GM12878 (cell line): ENCODE measurements at regions of chrX and their contacts with region 1.

Region 1: DNA sequence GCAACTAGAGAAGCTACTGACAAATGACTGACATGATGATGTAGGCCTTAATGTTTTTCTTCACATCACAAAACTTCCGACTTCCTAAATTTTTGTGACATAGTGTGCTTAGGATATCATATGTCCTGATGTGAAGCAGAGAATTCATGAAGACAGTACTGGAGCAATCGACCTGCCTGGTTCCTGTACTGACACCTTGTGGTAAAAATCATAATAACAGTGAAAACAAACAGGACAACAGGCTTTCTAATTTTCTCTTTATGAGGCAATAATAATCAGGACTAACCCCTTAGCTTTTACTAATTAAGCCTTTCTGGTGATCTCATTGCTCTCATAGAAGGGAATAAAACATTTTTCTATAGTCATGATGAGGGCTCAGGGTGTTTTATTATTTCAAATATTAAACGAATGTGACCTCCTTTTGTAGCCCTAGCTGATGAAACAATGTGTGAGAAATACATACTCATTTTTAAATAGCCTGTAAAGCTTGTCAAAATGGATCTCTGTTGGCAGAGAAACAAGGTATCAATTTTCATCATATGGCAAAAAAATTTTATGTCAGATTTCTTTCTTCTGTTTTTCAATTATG is 158.4 kb downstream of the TENT5D start:
- DNase-seq: no peak
- ATAC-seq: peak; percentile 70
- H3K4me3 ChIP-seq: no peak overlapping the region
- H3K27ac ChIP-seq: no peak overlapping the region
- H3K4me1 ChIP-seq: no peaks in the 10 kb centered on the region
- H3K27me3 ChIP-seq: no peaks in the 10 kb centered on the region
- CTCF ChIP-seq: peak; percentile 53 to 60 (median 56); a peak in 5 of 6 replicates
- EP300 ChIP-seq: no peak
- POLR2A ChIP-seq: no peak
- RAD21 ChIP-seq: peak; percentile 56

Region 2: DNA sequence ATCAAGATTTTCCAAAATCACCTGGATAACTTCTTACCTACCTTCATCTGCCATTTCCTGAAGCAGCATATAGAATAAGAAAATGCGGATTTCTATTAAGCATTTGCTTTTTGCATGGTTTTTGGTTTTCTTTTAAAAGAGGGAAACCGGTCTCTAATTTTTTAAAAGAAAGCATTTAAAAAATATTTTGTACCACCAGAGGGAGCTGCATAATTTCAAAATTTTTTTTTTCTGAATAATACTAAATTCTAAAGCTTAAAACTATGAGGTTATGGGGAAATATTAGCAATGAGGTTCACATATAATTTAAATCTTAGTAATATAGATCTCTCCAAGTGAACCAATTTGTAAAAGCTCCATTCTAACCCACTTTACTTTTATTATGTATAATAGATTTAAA is 296.1 kb before region 1 on chrX:
- CTCF ChIA-PET with region 1: no interaction called
- POLR2A ChIA-PET with region 1: no interaction called
- RAD21 ChIA-PET with region 1: no interaction called
- SMC1A ChIA-PET with region 1: no interaction called
- in situ Hi-C with region 1: no loop called
- intact Hi-C with region 1: loop called (anchors 5 kb)
- DNase-seq: no peak
- ATAC-seq: no peak
- H3K4me3 ChIP-seq: no peak overlapping the region
- H3K27ac ChIP-seq: no peak overlapping the region
- H3K4me1 ChIP-seq: no peaks in the 10 kb centered on the region
- H3K27me3 ChIP-seq: no peaks in the 10 kb centered on the region
- CTCF ChIP-seq: peak in 1 of 3 experiments; percentile 8; a peak in 1 of 6 replicates
- EP300 ChIP-seq: no peak
- POLR2A ChIP-seq: no peak
- RAD21 ChIP-seq: no peak

Region 3: DNA sequence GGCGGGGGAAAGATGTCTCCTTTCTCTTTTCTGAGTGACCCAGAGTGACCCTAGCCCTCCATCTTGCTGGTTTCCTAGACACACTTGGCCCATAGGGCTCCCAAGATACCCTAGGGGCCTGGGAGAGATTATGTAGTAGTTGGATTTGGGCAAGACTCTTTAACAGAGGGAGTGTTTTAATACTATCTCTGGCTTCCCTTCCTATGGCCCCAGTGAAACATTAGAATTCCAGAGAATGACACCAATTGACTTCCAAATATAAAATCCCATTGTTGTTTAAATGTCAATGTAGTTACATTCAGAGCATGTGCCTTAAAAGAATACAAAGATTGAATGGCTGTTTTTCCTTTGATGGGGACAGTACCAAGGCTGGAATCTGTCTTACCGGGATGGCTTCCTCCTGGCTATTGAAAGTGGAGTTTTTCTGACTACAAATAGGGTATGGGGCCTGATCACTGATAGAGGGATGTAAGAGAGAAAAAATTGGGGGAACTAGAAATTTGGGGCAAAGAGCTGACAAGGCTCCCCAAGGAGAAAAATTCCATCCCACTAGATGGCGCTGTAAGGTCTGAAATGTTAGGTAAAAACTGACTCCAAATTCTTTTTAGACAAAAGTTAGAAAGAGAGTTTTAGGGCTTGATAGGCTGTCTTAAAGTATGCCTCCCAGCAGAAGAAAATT is 147.6 kb before region 1 on chrX:
- CTCF ChIA-PET with region 1: interaction called, 3 read pairs
- POLR2A ChIA-PET with region 1: no interaction called
- RAD21 ChIA-PET with region 1: no interaction called
- SMC1A ChIA-PET with region 1: interaction called, 3 read pairs
- in situ Hi-C with region 1: no loop called
- intact Hi-C with region 1: loop called (anchors 1 kb)
- DNase-seq: no peak
- ATAC-seq: no peak
- H3K4me3 ChIP-seq: no peak overlapping the region
- H3K27ac ChIP-seq: no peak overlapping the region
- H3K4me1 ChIP-seq: no peaks in the 10 kb centered on the region
- H3K27me3 ChIP-seq: no peaks in the 10 kb centered on the region
- CTCF ChIP-seq: peak; percentile 23 to 37 (median 32); a peak in 3 of 6 replicates
- EP300 ChIP-seq: no peak
- POLR2A ChIP-seq: no peak
- RAD21 ChIP-seq: peak; percentile 35

Region 4: DNA sequence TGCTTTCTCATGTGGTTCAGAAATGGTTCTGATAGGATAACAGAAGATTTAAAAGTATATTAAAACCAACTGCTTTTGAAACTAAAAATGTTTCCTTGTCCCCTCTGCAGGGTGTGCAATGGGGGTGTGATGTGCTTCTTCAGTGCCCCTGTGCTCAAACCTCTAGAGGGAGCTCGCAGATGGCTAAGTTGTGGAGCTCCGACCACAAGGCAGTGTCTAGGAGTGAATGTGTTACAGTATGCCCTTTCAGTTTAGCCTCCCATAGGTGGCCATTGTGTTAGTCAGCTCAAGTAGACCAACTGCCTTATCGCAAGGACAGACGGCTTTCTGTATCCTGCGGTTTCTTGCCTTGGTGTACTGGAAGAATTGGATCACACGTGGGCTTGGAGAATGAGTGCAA is 27.9 kb before region 1 on chrX:
- CTCF ChIA-PET with region 1: interaction called, 15 read pairs
- POLR2A ChIA-PET with region 1: no interaction called
- RAD21 ChIA-PET with region 1: interaction called, 3 read pairs
- SMC1A ChIA-PET with region 1: interaction called, 3 read pairs
- in situ Hi-C with region 1: no loop called
- intact Hi-C with region 1: no loop called
- DNase-seq: no peak
- ATAC-seq: peak; percentile 97
- H3K4me3 ChIP-seq: no peak overlapping the region
- H3K27ac ChIP-seq: no peak overlapping the region
- H3K4me1 ChIP-seq: no peaks in the 10 kb centered on the region
- H3K27me3 ChIP-seq: no peaks in the 10 kb centered on the region
- CTCF ChIP-seq: peak; percentile 29 to 36 (median 33); a peak in 4 of 6 replicates
- EP300 ChIP-seq: no peak
- POLR2A ChIP-seq: no peak
- RAD21 ChIP-seq: peak; percentile 20; the same call in 1 of the 2 replicates